ENCODE measurements at regions of chr9 and their contacts with region 1.

Region 1: GRCh38 chr9:87259543-87260518 is 237.8 kb upstream of the DAPK1 start:
- DNase-seq: no peak
- ATAC-seq: no peak
- H3K4me3 ChIP-seq: no peak overlapping the region
- H3K4me3 Mint-ChIP-seq: no peak overlapping the region
- H3K27ac ChIP-seq: no peak overlapping the region
- H3K27ac Mint-ChIP-seq: no peak overlapping the region
- H3K4me1 ChIP-seq: no peaks in the 10 kb centered on the region
- H3K4me1 Mint-ChIP-seq: no peaks in the 10 kb centered on the region
- H3K27me3 ChIP-seq: no peaks in the 10 kb centered on the region
- H3K27me3 Mint-ChIP-seq: peaks cover 0 to 3% of the 10 kb centered on the region in 2 donors

Region 2: GRCh38 chr9:87280421-87280820 is 20.6 kb after region 1 on chr9:
- CTCF ChIA-PET with region 1: no interaction called
- POLR2A ChIA-PET with region 1: interaction called in 1 of 2 experiments, 11 read pairs
- DNase-seq: no peak
- ATAC-seq: no peak
- H3K4me3 ChIP-seq: no peak overlapping the region
- H3K4me3 Mint-ChIP-seq: no peak overlapping the region
- H3K27ac ChIP-seq: no peak overlapping the region
- H3K27ac Mint-ChIP-seq: no peak overlapping the region
- H3K4me1 ChIP-seq: peaks cover 9 to 17% of the 10 kb centered on the region in 2 experiments
- H3K4me1 Mint-ChIP-seq: peaks cover 10 to 24% (median 22%) of the 10 kb centered on the region in 3 donors
- H3K27me3 ChIP-seq: peaks cover 0 to 3% of the 10 kb centered on the region in 2 experiments
- H3K27me3 Mint-ChIP-seq: peaks cover 6 to 9% of the 10 kb centered on the region in 2 donors